Left lung (tissue), 14 donors: ENCODE measurements at regions of chr7 and their contacts with region 1.

Region 1: GRCh38 chr7:51162724-51163329 is 153.8 kb downstream of the COBL start:
- DNase-seq: peak in 3 of 4 donors; percentile 60 to 87 (median 79)
- ATAC-seq: peak; percentile 95
- H3K4me3 ChIP-seq: no peak overlapping the region
- H3K27ac ChIP-seq: no peak overlapping the region
- H3K4me1 ChIP-seq: peaks cover 0 to 4% of the 10 kb centered on the region in 2 donors
- H3K27me3 ChIP-seq: no peaks in the 10 kb centered on the region
- CTCF ChIP-seq: peak; percentile 74 to 75

Region 2: GRCh38 chr7:50092579-50093491 is 1070.0 kb before region 1 on chr7 and contains the start of gene ZPBP:
- intact Hi-C with region 1: loop called in 1 of 2 experiments (anchors 10 kb)
- DNase-seq: peak in 2 of 4 donors; percentile 44 to 81
- ATAC-seq: peak; percentile 92
- H3K4me3 ChIP-seq: peak within 1 kb of the TSS; percentile 33 to 46
- H3K27ac ChIP-seq: no peak within 1 kb of the TSS
- H3K4me1 ChIP-seq: peaks cover 7 to 8% of the 10 kb centered on the region in 2 donors
- H3K27me3 ChIP-seq: peaks cover 0 to 8% of the 10 kb centered on the region in 2 donors
- CTCF ChIP-seq: peak; percentile 60 to 69
- polyA plus RNA-seq, gene ZPBP: 0.21 to 0.73 (median 0.32) TPM in 4 of 6 donors, not detected in the others

Region 3: DNA sequence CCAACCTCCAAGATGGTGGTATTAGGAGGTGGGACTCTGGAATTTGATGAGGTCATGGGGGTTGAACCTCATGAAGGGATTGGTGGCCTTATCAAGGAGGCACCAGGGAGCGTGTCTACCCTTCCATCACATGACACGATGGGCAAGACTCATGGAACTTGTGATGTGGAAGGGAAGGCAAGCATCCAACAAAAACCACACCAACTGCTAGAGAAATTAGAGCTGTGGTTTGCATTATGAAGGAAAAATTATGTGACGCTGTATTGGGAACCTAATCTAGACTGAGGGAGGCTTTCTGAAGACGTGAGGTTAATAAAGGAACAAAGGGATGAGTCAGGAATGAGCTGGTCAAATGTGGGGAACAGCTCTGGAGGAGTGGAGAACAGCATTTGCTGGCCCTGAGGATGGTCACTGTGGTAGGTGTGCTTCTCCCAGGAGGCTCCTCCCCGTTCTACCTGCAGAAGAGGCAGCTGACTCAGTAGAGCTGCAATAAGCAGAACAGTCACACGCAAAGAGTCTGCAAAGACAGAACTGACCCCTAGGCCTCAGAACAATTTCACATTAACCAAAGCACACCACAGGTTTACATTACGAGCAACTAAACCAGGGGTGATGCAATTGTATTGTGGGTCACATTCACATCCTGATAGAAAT is 143.5 kb before region 1 on chr7:
- intact Hi-C with region 1: no loop called
- DNase-seq: no peak
- ATAC-seq: peak; percentile 56
- H3K4me3 ChIP-seq: no peak overlapping the region
- H3K27ac ChIP-seq: no peak overlapping the region
- H3K4me1 ChIP-seq: no peaks in the 10 kb centered on the region
- H3K27me3 ChIP-seq: no peaks in the 10 kb centered on the region
- CTCF ChIP-seq: no peak

Region 4: GRCh38 chr7:51209426-51209825 is 46.6 kb after region 1 on chr7:
- intact Hi-C with region 1: no loop called
- DNase-seq: no peak
- ATAC-seq: no peak
- H3K4me3 ChIP-seq: no peak overlapping the region
- H3K27ac ChIP-seq: no peak overlapping the region
- H3K4me1 ChIP-seq: no peaks in the 10 kb centered on the region
- H3K27me3 ChIP-seq: no peaks in the 10 kb centered on the region
- CTCF ChIP-seq: no peak

Region 5: GRCh38 chr7:51366930-51367613 is 204.2 kb after region 1 on chr7:
- intact Hi-C with region 1: loop called in 1 of 2 experiments (anchors 5 kb)
- DNase-seq: peak in 2 of 4 donors; percentile 44 to 73
- ATAC-seq: peak; percentile 97
- H3K4me3 ChIP-seq: no peak overlapping the region
- H3K27ac ChIP-seq: no peak overlapping the region
- H3K4me1 ChIP-seq: no peaks in the 10 kb centered on the region
- H3K27me3 ChIP-seq: no peaks in the 10 kb centered on the region
- CTCF ChIP-seq: peak; percentile 60 to 67